Activated B cell treated with CpG ODN at 0.5 μM for 24 hours (primary cell): ENCODE measurements at regions of chr3 and their contacts with region 1.

Region 1: GRCh38 chr3:152519376-152519775 is 250.6 kb downstream of the MBNL1 start:
- DNase-seq: no peak
- ATAC-seq: no peak
- H3K4me3 Mint-ChIP-seq: no peak overlapping the region
- H3K27ac Mint-ChIP-seq: peak overlapping the region; percentile 76
- H3K4me1 Mint-ChIP-seq: peaks cover 79% of the 10 kb centered on the region
- H3K27me3 Mint-ChIP-seq: no peaks in the 10 kb centered on the region
- CTCF ChIP-seq: no peak

Region 2: GRCh38 chr3:152385761-152386160 is 133.6 kb before region 1 on chr3:
- CTCF ChIA-PET with region 1: no interaction called
- POLR2A ChIA-PET with region 1: interaction called, 16 read pairs
- intact Hi-C with region 1: no loop called
- DNase-seq: no peak
- ATAC-seq: no peak
- H3K4me3 Mint-ChIP-seq: no peak overlapping the region
- H3K27ac Mint-ChIP-seq: peak overlapping the region; percentile 24
- H3K4me1 Mint-ChIP-seq: peaks cover 72% of the 10 kb centered on the region
- H3K27me3 Mint-ChIP-seq: no peaks in the 10 kb centered on the region
- CTCF ChIP-seq: no peak

Region 3: GRCh38 chr3:152466784-152467183 is 52.6 kb before region 1 on chr3:
- CTCF ChIA-PET with region 1: interaction called, 20 read pairs
- POLR2A ChIA-PET with region 1: interaction called, 10 read pairs
- intact Hi-C with region 1: no loop called
- DNase-seq: no peak
- ATAC-seq: peak; percentile 69
- H3K4me3 Mint-ChIP-seq: no peak overlapping the region
- H3K27ac Mint-ChIP-seq: peak overlapping the region; percentile 71
- H3K4me1 Mint-ChIP-seq: peaks cover 22% of the 10 kb centered on the region
- H3K27me3 Mint-ChIP-seq: no peaks in the 10 kb centered on the region
- CTCF ChIP-seq: no peak

Region 4: DNA sequence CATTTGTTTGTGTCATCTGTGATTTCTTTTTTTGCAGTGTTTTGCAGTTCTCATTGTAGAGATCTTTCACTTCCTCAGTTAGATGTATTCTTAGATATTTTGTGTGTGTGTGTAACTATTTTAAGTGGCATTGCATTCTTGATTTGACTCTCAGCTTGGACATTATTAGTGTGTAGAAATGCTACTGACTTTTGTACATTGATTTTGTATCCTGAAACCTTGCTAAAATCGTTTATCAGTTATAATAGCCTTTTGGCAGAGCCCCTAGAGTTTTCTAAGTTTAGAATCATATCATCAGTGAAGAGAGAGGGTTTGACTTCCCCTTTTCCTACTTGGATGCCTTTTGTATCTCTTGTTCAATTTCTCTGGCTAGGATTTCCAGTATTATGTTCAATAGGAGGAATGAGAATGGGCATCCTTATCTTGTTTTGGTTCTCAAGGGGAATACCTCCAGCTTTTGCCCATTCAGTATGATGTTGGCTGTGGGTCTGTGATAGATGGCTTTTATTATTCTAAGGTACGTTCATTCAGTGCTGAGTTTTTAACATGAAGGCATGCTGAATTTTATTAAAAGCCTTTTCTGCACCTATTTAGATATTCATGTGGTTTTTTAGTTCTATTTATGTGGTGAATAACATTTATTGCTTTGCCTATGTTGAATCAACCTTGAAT is 39.0 kb before region 1 on chr3:
- CTCF ChIA-PET with region 1: interaction called, 106 read pairs
- POLR2A ChIA-PET with region 1: interaction called, 22 read pairs
- intact Hi-C with region 1: loop called (anchors 1 kb)
- DNase-seq: no peak
- ATAC-seq: peak; percentile 49
- H3K4me3 Mint-ChIP-seq: peak overlapping the region; percentile 55
- H3K27ac Mint-ChIP-seq: peak overlapping the region; percentile 82
- H3K4me1 Mint-ChIP-seq: peaks cover 54% of the 10 kb centered on the region
- H3K27me3 Mint-ChIP-seq: no peaks in the 10 kb centered on the region
- CTCF ChIP-seq: no peak

Region 5: DNA sequence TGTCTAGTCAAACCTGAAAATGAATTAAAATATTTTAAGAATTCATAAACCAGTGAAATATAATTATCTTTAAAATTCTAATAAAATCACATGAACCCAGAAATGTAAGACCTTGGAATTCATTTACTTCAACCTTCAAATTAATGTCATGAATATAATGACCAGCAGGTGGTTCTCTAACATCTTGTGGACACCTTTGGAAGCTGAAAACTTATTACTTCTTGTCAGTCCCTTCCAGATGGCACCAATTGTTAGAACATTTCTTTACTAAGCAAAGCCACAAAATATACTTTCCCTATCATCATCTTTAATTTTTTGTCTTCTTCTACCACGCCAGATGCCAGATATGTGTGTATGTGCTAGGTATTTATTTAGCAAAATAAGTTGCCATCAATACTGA is 10.7 kb before region 1 on chr3:
- CTCF ChIA-PET with region 1: interaction called, 151 read pairs
- POLR2A ChIA-PET with region 1: interaction called, 28 read pairs
- intact Hi-C with region 1: loop called (anchors 1 kb)
- DNase-seq: no peak
- ATAC-seq: no peak
- H3K4me3 Mint-ChIP-seq: peak overlapping the region; percentile 6
- H3K27ac Mint-ChIP-seq: peak overlapping the region; percentile 82
- H3K4me1 Mint-ChIP-seq: peaks cover 88% of the 10 kb centered on the region
- H3K27me3 Mint-ChIP-seq: no peaks in the 10 kb centered on the region
- CTCF ChIP-seq: no peak